ENCODE measurements at regions of chr1 and their contacts with region 1.

Region 1: DNA sequence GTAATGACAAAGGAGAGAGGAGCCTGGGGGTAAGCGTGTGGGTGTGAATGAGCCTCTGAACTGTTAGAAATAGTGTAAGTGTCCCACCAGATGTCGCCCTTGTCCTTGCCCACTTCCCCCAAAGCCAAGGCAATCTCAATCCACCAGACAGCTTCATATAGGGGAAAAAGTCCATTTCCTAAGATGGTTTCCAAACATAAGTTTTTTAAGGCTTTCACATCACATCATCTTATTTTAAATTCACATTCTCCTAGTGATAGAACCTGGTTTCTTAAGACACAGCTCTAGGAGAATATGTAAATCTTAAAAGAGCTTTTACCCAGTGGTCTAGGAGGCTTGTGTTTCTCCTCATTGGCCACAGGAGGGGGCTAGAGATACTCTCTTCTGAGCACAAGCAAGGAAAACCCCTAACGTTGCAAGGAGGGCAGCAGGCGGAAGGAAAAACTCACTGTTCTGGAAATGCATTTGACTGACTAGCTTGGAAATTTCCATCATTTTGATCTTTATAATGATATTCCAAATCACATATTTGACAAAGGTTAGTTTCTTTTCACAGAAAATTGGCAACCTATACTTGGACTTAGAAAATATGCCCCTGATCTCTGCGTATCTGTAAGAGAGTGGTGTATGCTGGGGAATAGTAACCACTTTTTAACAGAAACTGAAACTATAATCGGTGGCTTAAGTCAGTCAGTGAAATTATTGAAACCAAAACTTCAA is 51.9 kb upstream of the LPAR3 start:
- DNase-seq: peak; percentile 82
- ATAC-seq: peak; percentile 93
- H3K4me3 Mint-ChIP-seq: peak overlapping the region; percentile 80
- H3K27ac Mint-ChIP-seq: peak overlapping the region; percentile 92
- H3K4me1 Mint-ChIP-seq: peaks cover 21% of the 10 kb centered on the region
- H3K27me3 Mint-ChIP-seq: no peaks in the 10 kb centered on the region

Region 2: DNA sequence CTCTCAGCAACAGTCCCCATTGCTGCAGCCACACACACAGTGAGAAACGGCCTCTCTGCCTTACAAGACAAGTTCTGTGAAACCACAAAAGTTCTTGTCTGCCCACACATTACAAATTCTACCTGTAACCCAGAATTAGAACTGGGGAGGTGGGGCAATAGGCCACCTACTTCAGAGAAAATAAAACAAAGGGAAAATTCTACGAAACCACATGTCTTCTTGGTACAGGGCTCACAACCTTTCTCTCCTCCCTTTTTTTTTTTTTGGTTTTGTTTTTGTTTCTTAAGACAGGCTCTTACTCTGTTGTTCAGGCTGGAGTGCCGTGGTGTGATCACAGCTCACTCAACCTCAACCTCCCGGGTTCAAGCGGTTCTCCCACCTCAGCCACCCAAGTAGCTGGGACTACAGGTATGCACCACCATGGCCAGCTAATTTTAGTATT is 82.1 kb before region 1 on chr1:
- CTCF ChIA-PET with region 1: no interaction called
- DNase-seq: peak; percentile 74
- ATAC-seq: peak; percentile 86
- H3K4me3 Mint-ChIP-seq: peak overlapping the region; percentile 60
- H3K27ac Mint-ChIP-seq: peak overlapping the region; percentile 90
- H3K4me1 Mint-ChIP-seq: peaks cover 35% of the 10 kb centered on the region
- H3K27me3 Mint-ChIP-seq: no peaks in the 10 kb centered on the region

Region 3: GRCh38 chr1:84892705-84893618 is 52.0 kb before region 1 on chr1 and contains the start of gene LPAR3:
- CTCF ChIA-PET with region 1: no interaction called
- DNase-seq: peak; percentile 55
- ATAC-seq: peak; percentile 76
- H3K4me3 Mint-ChIP-seq: peak within 1 kb of the TSS; percentile 65
- H3K27ac Mint-ChIP-seq: no peak within 1 kb of the TSS
- H3K4me1 Mint-ChIP-seq: peaks cover 17% of the 10 kb centered on the region
- H3K27me3 Mint-ChIP-seq: peaks cover 54% of the 10 kb centered on the region
- total RNA-seq, gene LPAR3: 0.37 to 0.47 TPM

Region 4: GRCh38 chr1:84959294-84959693 is 14.4 kb after region 1 on chr1:
- CTCF ChIA-PET with region 1: interaction called, 26 read pairs
- DNase-seq: peak; percentile 76
- ATAC-seq: peak; percentile 95
- H3K4me3 Mint-ChIP-seq: no peak overlapping the region
- H3K27ac Mint-ChIP-seq: peak overlapping the region; percentile 41
- H3K4me1 Mint-ChIP-seq: peaks cover 17% of the 10 kb centered on the region
- H3K27me3 Mint-ChIP-seq: no peaks in the 10 kb centered on the region

Region 5: DNA sequence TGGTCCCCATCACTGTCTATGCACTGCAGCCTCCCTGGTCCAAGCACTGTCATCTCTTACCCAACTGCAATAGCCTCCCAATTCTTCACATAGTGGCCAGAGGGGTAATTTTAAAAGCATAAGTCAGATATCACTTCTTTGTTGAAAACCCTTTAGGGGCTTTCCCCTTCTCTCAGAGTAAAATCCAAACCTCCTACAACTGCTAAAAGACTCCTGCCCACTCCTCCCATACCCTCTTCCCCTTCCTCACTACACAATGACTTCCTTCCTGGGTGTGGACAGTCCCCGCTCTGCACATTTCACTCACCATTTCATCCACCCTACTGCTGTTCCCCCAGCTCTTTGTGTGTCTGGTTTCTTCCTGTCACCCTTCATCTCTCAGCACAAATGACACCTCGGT is 43.7 kb after region 1 on chr1:
- CTCF ChIA-PET with region 1: interaction called, 25 read pairs
- DNase-seq: peak; percentile 59
- ATAC-seq: peak; percentile 74
- H3K4me3 Mint-ChIP-seq: peak overlapping the region; percentile 59
- H3K27ac Mint-ChIP-seq: peak overlapping the region; percentile 92
- H3K4me1 Mint-ChIP-seq: peaks cover 53% of the 10 kb centered on the region
- H3K27me3 Mint-ChIP-seq: no peaks in the 10 kb centered on the region

Region 6: GRCh38 chr1:85019994-85020393 is 75.1 kb after region 1 on chr1:
- CTCF ChIA-PET with region 1: interaction called, 148 read pairs
- DNase-seq: no peak
- ATAC-seq: no peak
- H3K4me3 Mint-ChIP-seq: no peak overlapping the region
- H3K27ac Mint-ChIP-seq: no peak overlapping the region
- H3K4me1 Mint-ChIP-seq: peaks cover 5% of the 10 kb centered on the region
- H3K27me3 Mint-ChIP-seq: no peaks in the 10 kb centered on the region

Region 7: DNA sequence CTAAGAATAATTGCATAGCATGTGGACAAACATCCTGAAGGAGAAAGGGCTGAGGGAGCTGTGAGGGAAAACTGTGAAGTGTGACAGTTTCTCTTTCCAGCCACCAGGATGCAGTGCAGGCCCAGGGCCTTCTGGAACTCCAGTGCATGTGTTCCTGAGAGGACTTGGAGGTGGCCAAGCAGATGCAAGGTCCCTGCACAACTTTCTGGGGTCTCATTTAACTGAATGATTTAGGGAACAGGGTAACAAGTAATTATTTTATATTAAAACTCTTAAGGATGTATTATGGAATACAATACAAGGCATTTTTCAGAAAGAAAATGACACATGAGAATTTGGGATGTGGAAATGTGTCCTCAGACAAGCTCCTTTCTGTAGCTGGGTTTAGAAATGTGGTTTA is 164.5 kb after region 1 on chr1:
- CTCF ChIA-PET with region 1: interaction called, 24 read pairs
- DNase-seq: peak; percentile 58
- ATAC-seq: peak; percentile 82
- H3K4me3 Mint-ChIP-seq: no peak overlapping the region
- H3K27ac Mint-ChIP-seq: no peak overlapping the region
- H3K4me1 Mint-ChIP-seq: no peaks in the 10 kb centered on the region
- H3K27me3 Mint-ChIP-seq: peaks cover 2% of the 10 kb centered on the region

Region 8: DNA sequence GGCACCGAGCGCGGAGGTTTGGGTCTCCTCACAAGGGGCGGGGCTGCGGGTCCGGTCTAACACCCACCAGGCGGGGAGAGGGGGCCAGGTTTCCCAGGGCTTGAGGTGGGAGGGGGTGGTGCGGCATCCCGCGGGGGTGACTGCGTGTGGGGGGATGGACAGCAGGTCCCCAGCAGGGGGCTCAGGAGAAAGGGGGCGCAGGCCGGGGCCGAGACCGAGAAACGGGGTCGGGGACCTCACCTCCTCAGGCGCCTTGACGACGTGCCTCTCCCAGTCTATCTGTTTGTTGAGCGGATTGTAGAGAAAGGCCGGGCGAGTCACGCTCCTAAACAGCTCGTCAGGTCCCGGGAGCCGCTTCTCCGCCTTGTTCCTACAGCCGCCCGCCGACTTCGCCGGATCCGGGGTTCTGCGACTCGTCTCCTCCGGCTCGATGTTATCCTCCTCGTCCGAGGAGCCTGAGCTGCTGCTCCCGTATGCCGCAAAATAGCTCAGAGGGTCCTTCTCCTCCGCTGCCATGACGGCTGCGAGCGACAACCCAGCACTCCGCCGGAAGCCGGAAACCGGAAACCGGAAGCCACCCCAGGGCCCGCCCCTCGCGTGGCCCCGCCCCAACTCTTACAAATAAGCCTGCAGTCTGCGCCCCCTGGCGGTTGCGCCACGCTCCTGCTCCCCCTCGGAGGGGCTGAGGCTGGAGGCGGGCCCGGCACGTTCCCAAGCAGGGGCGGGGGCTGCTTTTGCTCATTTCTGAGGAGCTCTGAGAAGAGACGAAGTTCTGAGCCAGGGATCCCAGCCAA is 314.4 kb after region 1 on chr1 and contains the start of gene C1orf52:
- CTCF ChIA-PET with region 1: interaction called, 196 read pairs
- DNase-seq: peak; percentile 96
- ATAC-seq: peak; percentile 96
- H3K4me3 Mint-ChIP-seq: peak within 1 kb of the TSS; percentile 96
- H3K27ac Mint-ChIP-seq: peak within 1 kb of the TSS; percentile 95
- H3K4me1 Mint-ChIP-seq: peaks cover 30% of the 10 kb centered on the region
- H3K27me3 Mint-ChIP-seq: no peaks in the 10 kb centered on the region
- total RNA-seq, gene C1orf52: 23.5 to 28.7 TPM